ENCODE measurements at regions of chr6 and their contacts with region 1.

Region 1: GRCh38 chr6:53956068-53956711 is 155.1 kb upstream of the MLIP start:
- DNase-seq: peak; percentile 77 to 89
- H3K4me3 ChIP-seq: no peak overlapping the region
- H3K27ac ChIP-seq: no peak overlapping the region
- H3K4me1 ChIP-seq: peaks cover 0 to 5% (median 0%) of the 10 kb centered on the region in 4 donors
- H3K27me3 ChIP-seq: no peaks in the 10 kb centered on the region
- CTCF ChIP-seq: peak in 5 of 7 experiments; percentile 52 to 70 (median 65)
- EP300 ChIP-seq: no peak
- POLR2A ChIP-seq: no peak

Region 2: GRCh38 chr6:53794720-53795253 is 161.4 kb before region 1 on chr6 and contains the start of gene LRRC1:
- intact Hi-C with region 1: loop called (anchors 10 kb)
- DNase-seq: peak; percentile 95 to 98
- H3K4me3 ChIP-seq: peak within 1 kb of the TSS; percentile 76 to 94 (median 88)
- H3K27ac ChIP-seq: peak within 1 kb of the TSS; percentile 86 to 91 (median 90)
- H3K4me1 ChIP-seq: peaks cover 14 to 47% (median 37%) of the 10 kb centered on the region in 4 donors
- H3K27me3 ChIP-seq: no peaks in the 10 kb centered on the region
- CTCF ChIP-seq: no peak
- EP300 ChIP-seq: no peak
- POLR2A ChIP-seq: peak in 1 of 4 donors; percentile 52
- total RNA-seq, gene LRRC1: 2.9 to 50.4 (median 35.1) TPM

Region 3: DNA sequence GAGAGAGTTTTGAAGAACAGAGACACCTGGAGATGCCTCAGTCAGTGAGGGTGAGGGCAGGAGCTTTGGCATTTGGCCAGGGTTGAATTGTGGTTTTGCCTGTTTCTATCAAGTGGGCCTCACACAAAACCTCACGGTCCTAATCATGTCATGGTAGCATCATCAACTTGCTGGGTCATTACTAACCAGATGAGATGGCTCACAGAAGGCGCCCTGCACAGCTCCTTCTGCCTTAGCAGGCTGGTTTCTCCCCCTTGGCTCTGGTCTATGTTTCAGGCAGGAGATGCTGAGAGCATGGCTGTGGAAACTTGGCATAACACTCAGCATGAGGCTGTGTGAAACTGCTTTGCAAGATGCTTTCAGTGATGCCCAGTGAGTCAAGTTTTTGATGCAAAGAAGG is 62.1 kb before region 1 on chr6:
- intact Hi-C with region 1: no loop called
- DNase-seq: peak in 1 of 2 donors; percentile 63
- H3K4me3 ChIP-seq: no peak overlapping the region
- H3K27ac ChIP-seq: no peak overlapping the region
- H3K4me1 ChIP-seq: peaks cover 0 to 12% (median 5%) of the 10 kb centered on the region in 4 donors
- H3K27me3 ChIP-seq: no peaks in the 10 kb centered on the region
- CTCF ChIP-seq: no peak
- EP300 ChIP-seq: no peak
- POLR2A ChIP-seq: no peak

Region 4: DNA sequence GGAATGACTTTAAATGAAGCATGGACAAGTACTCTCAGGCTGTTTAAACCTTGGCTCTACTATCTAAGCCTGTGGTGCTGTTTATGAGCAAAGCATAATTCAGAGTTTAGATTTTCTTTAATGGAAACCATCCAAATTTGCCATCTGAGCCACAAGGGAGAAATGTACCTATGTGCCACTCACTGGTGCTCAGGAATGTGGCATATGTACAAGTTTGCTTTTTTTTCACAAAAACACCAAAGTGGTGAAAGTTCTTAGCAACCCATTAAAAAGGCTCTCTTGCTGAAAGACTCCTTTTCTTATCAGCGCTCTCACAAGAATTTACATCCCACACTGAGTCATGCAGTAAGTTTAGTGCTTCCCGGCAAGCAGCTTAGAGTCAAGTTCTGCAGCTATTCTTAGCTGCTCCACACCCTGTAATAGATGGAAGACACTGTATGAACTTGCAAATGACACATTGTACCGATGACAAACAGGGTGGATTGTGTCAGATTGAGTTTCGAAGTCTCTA is 97.7 kb after region 1 on chr6:
- intact Hi-C with region 1: no loop called
- DNase-seq: peak in 1 of 2 donors; percentile 74
- H3K4me3 ChIP-seq: no peak overlapping the region
- H3K27ac ChIP-seq: no peak overlapping the region
- H3K4me1 ChIP-seq: peaks cover 0 to 9% (median 3%) of the 10 kb centered on the region in 4 donors
- H3K27me3 ChIP-seq: no peaks in the 10 kb centered on the region
- CTCF ChIP-seq: no peak
- EP300 ChIP-seq: no peak
- POLR2A ChIP-seq: no peak

Region 5: DNA sequence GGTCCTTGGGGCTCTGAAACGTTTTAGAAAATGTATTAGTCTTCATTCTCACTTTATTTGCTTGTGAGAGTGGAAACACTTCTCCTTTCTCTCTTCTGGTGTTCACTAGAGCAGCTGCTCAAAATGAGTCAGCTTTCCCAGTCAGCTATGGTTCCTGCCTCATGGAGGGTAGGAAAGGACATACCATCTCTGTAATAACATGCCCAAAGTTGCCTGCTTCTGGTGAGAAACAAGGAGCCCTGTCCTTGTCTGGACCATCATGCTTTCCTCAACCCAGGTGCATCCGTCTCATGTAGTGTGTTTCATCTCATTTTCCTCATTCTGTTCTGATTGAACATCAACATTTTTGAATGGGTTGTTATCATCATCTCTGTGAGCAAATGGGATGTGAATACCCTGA is 335.0 kb after region 1 on chr6:
- intact Hi-C with region 1: no loop called
- DNase-seq: no peak
- H3K4me3 ChIP-seq: no peak overlapping the region
- H3K27ac ChIP-seq: no peak overlapping the region
- H3K4me1 ChIP-seq: no peaks in the 10 kb centered on the region
- H3K27me3 ChIP-seq: no peaks in the 10 kb centered on the region
- CTCF ChIP-seq: no peak
- EP300 ChIP-seq: no peak
- POLR2A ChIP-seq: no peak

Measured in stomach (tissue), 19 donors.